ENCODE measurements at regions of chr3 and their contacts with region 1.

Region 1: GRCh38 chr3:174125267-174125824 is 727.8 kb downstream of the NLGN1 start:
- DNase-seq: peak; percentile 71
- ATAC-seq: peak; percentile 82
- H3K4me3 ChIP-seq: no peak overlapping the region
- H3K27ac ChIP-seq: no peak overlapping the region
- H3K4me1 ChIP-seq: peaks cover 18% of the 10 kb centered on the region
- H3K27me3 ChIP-seq: no peaks in the 10 kb centered on the region
- CTCF ChIP-seq: peak; percentile 94

Region 2: DNA sequence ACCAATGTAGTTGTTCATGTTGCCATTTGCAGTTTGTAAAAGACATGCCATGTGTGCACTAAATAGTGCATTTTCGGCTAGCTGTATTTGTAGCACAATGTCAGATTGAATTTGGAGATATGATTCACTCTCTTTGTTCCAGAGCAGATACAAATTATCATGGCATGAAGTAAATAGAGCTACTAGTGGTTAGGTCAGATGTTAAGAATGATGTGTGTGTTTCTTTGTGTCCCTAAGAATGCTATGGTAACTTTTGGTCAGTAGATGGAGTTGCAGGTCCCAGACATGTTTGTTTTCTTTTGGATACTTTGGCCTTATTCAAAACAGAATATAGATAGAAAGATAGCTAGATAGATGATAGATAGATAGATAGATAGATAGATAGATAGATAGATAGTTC is 132.0 kb before region 1 on chr3:
- CTCF ChIA-PET with region 1: no interaction called
- POLR2A ChIA-PET with region 1: no interaction called
- intact Hi-C with region 1: loop called (anchors 10 kb)
- DNase-seq: peak; percentile 45
- ATAC-seq: peak; percentile 85
- H3K4me3 ChIP-seq: no peak overlapping the region
- H3K27ac ChIP-seq: no peak overlapping the region
- H3K4me1 ChIP-seq: no peaks in the 10 kb centered on the region
- H3K27me3 ChIP-seq: no peaks in the 10 kb centered on the region
- CTCF ChIP-seq: peak; percentile 67

Region 3: DNA sequence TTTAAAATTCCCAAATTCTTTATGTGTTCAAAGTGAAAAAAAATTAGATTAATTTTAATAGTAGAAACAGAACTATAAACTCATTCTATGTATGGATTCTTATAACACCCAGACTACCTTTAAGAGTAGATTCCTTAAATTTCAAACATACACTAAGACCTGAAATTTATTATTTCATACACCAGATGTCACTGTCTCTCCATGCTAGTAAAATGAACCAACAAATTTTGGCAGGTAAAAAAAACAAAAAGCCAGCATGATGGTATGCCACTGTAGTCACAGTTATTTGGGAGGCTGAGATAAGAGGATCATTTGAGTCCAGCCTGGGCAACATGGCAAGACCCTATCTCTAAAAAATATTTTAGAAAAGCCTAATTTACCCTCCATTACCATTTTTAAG is 272.5 kb after region 1 on chr3:
- CTCF ChIA-PET with region 1: no interaction called
- POLR2A ChIA-PET with region 1: no interaction called
- intact Hi-C with region 1: loop called (anchors 5 kb)
- DNase-seq: peak; percentile 73
- ATAC-seq: no peak
- H3K4me3 ChIP-seq: no peak overlapping the region
- H3K27ac ChIP-seq: no peak overlapping the region
- H3K4me1 ChIP-seq: no peaks in the 10 kb centered on the region
- H3K27me3 ChIP-seq: no peaks in the 10 kb centered on the region
- CTCF ChIP-seq: peak; percentile 69

Region 4: DNA sequence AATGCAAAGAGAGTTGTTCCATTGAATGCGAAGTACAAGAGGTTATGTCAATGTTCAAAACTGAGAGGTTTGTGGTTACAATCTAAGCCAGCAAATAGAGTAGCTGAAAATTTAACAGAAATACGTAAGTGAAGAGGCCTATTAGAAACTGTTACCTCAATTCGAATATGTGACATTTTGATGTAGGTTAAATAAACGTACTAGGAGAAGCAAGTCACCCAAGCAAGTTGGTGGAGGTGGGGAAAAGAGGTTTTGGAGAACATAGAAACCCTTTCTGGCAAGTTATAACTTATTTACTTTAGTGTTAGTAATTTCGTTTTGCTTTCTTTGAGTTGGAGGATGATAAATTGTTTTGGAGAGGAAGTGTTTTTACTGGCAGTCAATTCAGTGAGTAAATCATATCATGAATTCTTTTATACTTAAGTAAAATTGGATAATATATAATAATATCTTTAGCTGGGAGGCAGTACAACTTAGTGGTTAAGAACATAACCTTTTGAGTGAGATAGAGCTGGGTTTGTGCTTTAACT is 642.6 kb after region 1 on chr3:
- CTCF ChIA-PET with region 1: no interaction called
- POLR2A ChIA-PET with region 1: no interaction called
- intact Hi-C with region 1: loop called (anchors 5 kb)
- DNase-seq: peak; percentile 74
- ATAC-seq: peak; percentile 85
- H3K4me3 ChIP-seq: 0 out of 2 replicates have a peak overlapping the region, but pooled peaks have one; percentile 6
- H3K27ac ChIP-seq: peak overlapping the region; percentile 62
- H3K4me1 ChIP-seq: peaks cover 39% of the 10 kb centered on the region
- H3K27me3 ChIP-seq: no peaks in the 10 kb centered on the region
- CTCF ChIP-seq: no peak

Region 5: DNA sequence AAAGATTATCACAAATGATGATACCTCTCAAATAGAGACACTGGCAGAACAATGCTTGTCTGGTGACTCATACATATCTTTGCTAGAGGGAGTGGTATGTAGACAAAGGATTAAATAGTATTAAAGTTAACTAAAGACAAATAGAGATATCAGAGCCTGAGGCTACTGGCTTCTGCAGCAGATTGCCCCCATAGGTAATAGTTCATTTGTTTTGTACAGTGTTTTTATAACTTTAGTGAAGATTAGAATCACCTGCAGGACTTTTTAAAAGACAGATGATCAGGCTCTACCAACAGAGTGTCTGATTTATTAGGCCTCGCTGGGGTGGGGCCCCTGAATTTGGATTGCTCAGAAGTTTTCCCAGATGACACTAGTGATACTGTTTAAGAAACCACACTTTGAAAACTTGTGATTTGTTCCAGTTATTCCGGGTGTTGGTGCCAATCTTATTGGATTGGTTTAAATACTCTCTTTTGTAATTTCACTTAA is 830.2 kb after region 1 on chr3:
- CTCF ChIA-PET with region 1: no interaction called
- POLR2A ChIA-PET with region 1: no interaction called
- intact Hi-C with region 1: loop called (anchors 10 kb)
- DNase-seq: peak; percentile 90
- ATAC-seq: peak; percentile 84
- H3K4me3 ChIP-seq: 0 out of 2 replicates have a peak overlapping the region, but pooled peaks have one; percentile 2
- H3K27ac ChIP-seq: peak overlapping the region; percentile 81
- H3K4me1 ChIP-seq: peaks cover 61% of the 10 kb centered on the region
- H3K27me3 ChIP-seq: no peaks in the 10 kb centered on the region
- CTCF ChIP-seq: no peak

Measured in PC-3 (cell line).